Right ventricle myocardium inferior (tissue), 1 donor: ENCODE measurements at regions of chr1 and their contacts with region 1.

Region 1: GRCh38 chr1:99638853-99639252 is 7.1 kb upstream of the PALMD start:
- DNase-seq: no peak
- ATAC-seq: peak; percentile 39

Region 2: GRCh38 chr1:99599678-99600175 is 39.1 kb before region 1 on chr1:
- intact Hi-C with region 1: loop called (anchors 2 kb)
- DNase-seq: peak; percentile 68
- ATAC-seq: peak; percentile 28

Region 3: GRCh38 chr1:99621340-99621901 is 17.4 kb before region 1 on chr1:
- intact Hi-C with region 1: no loop called
- DNase-seq: no peak
- ATAC-seq: no peak

Region 4: GRCh38 chr1:99886841-99887240 is 248.0 kb after region 1 on chr1:
- intact Hi-C with region 1: no loop called
- DNase-seq: no peak
- ATAC-seq: no peak